WTC11 (cell line): ENCODE measurements at regions of chr16 and their contacts with region 1.

Region 1: GRCh38 chr16:57899771-57900661 is 70.9 kb downstream of the CNGB1 start:
- DNase-seq: peak; percentile 84
- ATAC-seq: peak; percentile 71
- H3K4me3 Mint-ChIP-seq: no peak overlapping the region
- H3K27ac Mint-ChIP-seq: no peak overlapping the region
- H3K4me1 Mint-ChIP-seq: peaks cover 9% of the 10 kb centered on the region; the same call in 1 of the 2 replicates
- H3K27me3 Mint-ChIP-seq: no peaks in the 10 kb centered on the region
- CTCF ChIP-seq: peak; percentile 82

Region 2: DNA sequence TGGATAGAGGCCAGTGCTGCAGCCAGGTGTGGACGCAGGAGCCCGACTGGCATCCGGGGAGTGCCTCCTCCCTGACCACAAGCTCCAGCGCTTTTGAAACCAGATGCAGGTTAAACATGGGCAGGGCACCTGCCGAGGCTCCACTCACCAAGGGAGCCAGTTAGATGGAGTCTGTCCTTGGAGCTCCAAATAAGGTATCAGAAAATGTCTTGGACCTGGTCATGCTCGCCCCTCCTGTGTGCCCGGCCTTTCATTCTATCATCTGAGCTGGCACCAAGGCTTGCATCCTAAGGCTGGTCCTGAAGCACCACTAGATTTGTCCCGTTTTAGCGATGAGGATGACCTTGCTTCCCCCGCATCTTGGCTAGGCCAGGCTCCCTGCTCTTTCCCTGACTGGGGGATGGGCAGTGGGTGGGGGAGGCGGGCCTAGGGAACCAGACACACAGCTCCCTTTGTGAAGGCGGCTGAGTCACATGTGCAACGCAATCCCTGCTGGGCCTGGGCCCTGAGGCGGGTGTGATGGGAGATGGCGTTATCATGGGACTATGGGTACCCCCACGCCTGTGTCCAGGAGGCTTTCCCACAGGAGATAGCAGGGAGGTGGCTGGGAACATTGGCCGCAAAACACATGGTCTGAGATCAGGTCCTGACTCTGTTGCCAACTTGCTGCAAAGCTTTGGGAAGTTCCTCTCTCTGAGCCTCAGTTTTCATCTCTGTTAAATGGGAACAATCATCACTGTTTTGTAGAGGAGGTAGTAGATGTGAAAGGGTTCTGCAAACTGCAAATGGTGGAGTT is 276.6 kb before region 1 on chr16:
- CTCF ChIA-PET with region 1: no interaction called
- POLR2A ChIA-PET with region 1: no interaction called
- DNase-seq: peak; percentile 49
- ATAC-seq: peak; percentile 15
- H3K4me3 Mint-ChIP-seq: no peak overlapping the region
- H3K27ac Mint-ChIP-seq: no peak overlapping the region
- H3K4me1 Mint-ChIP-seq: peaks cover 37% of the 10 kb centered on the region
- H3K27me3 Mint-ChIP-seq: no peaks in the 10 kb centered on the region
- CTCF ChIP-seq: no peak

Region 3: DNA sequence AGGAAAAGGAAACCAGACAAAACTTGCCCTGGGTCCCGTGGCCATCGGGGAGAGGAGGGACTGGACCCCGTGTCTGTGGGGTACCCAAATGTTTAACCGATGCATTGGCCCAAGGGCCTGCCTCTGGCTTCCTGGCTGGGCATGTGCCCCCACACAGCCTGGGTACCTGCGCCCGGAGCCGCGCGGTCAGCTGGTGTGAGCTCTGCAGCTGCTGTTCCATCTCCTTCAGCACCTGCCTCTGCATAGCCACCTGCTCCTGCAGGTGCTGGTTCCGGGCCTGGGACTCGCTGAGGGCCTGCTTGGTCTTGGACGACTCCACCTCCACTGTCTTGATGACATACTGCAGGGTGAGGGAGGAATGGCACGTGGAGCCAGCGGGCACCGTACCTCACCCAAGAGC is 129.7 kb before region 1 on chr16:
- CTCF ChIA-PET with region 1: no interaction called
- POLR2A ChIA-PET with region 1: no interaction called
- DNase-seq: no peak
- ATAC-seq: no peak
- H3K4me3 Mint-ChIP-seq: no peak overlapping the region
- H3K27ac Mint-ChIP-seq: no peak overlapping the region
- H3K4me1 Mint-ChIP-seq: peaks cover 19% of the 10 kb centered on the region
- H3K27me3 Mint-ChIP-seq: peaks cover 3% of the 10 kb centered on the region; the same call in 1 of the 2 replicates
- CTCF ChIP-seq: no peak

Region 4: GRCh38 chr16:57882792-57883191 is 17.2 kb before region 1 on chr16:
- CTCF ChIA-PET with region 1: interaction called, 10 read pairs
- POLR2A ChIA-PET with region 1: no interaction called
- DNase-seq: no peak
- ATAC-seq: no peak
- H3K4me3 Mint-ChIP-seq: no peak overlapping the region
- H3K27ac Mint-ChIP-seq: no peak overlapping the region
- H3K4me1 Mint-ChIP-seq: peaks cover 23% of the 10 kb centered on the region
- H3K27me3 Mint-ChIP-seq: peaks cover 27% of the 10 kb centered on the region
- CTCF ChIP-seq: no peak